ENCODE measurements at regions of chr12 and their contacts with region 1.

Region 1: GRCh38 chr12:116358893-116359761 is 81.6 kb upstream of the MED13L start:
- DNase-seq: peak; percentile 67
- H3K4me3 Mint-ChIP-seq: peak overlapping the region; percentile 65
- H3K27ac Mint-ChIP-seq: peak overlapping the region; percentile 77
- H3K4me1 Mint-ChIP-seq: peaks cover 25% of the 10 kb centered on the region
- H3K27me3 Mint-ChIP-seq: no peaks in the 10 kb centered on the region

Region 2: GRCh38 chr12:116319898-116320621 is 39.1 kb before region 1 on chr12:
- CTCF ChIA-PET with region 1: no interaction called
- intact Hi-C with region 1: loop called (anchors 1 kb)
- DNase-seq: peak; percentile 50
- H3K4me3 Mint-ChIP-seq: peak overlapping the region; percentile 45
- H3K27ac Mint-ChIP-seq: peak overlapping the region; percentile 39
- H3K4me1 Mint-ChIP-seq: peaks cover 38% of the 10 kb centered on the region
- H3K27me3 Mint-ChIP-seq: no peaks in the 10 kb centered on the region

Region 3: DNA sequence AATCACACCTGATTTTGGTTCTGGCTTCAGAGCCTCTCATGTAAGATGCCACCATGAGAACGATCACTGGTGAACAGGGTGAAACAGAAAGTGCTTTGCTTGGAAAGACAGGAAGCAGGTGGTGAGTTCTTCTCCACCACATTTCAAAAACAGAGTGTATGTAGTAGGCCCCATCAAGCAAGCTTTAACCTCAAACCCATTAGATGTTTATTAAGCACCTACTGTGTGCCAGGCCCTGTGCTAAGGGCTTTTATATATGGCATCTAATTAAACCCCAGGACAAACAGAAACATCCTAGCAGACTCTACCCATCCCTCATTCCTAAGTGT is 33.8 kb before region 1 on chr12:
- CTCF ChIA-PET with region 1: no interaction called
- intact Hi-C with region 1: loop called (anchors 1 kb)
- DNase-seq: peak; percentile 50
- H3K4me3 Mint-ChIP-seq: no peak overlapping the region
- H3K27ac Mint-ChIP-seq: peak overlapping the region; percentile 70
- H3K4me1 Mint-ChIP-seq: peaks cover 32% of the 10 kb centered on the region
- H3K27me3 Mint-ChIP-seq: no peaks in the 10 kb centered on the region